Heart right ventricle (tissue), 16 donors: ENCODE measurements at regions of chr20 and their contacts with region 1.

Region 1: DNA sequence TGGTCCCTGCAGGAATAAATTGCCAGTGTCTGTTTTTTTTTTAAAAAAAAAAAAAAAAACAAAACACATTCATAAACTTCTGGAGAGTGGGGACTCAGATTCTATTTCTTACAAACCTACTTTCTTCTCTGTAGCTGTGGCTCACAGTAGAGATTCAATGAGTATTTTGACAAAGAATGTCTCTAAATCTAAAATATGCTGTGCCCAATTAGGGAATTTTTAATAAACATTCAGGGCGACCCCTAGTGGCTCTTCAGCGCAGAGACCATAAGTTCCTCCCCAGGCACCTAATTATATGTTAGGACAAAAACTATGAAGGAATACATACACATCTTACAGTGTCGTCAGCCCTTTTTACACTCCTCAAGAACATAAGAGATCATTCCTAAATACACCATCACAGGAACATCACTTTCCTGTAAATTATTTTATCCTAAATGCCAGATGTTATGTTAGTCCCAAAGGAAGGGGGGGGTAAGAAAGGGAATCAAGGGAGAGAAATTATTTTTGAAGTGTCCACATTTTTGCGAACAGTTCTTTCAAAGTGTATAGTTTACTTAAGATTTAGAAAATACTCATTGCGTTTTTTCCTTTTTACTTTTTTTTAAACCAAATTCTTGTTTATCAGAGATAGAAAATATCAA is 21.8 kb upstream of the NAA20 start:
- DNase-seq: peak in 1 of 2 donors; percentile 47
- ATAC-seq: peak in 4 of 8 donors; percentile 27 to 54 (median 34)
- H3K4me3 ChIP-seq: no peak overlapping the region
- H3K27ac ChIP-seq: peak overlapping the region in 8 of 10 donors; percentile 15 to 81 (median 74)
- H3K4me1 ChIP-seq: peaks cover 42 to 99% (median 88%) of the 10 kb centered on the region in 9 donors
- H3K27me3 ChIP-seq: no peaks in the 10 kb centered on the region
- CTCF ChIP-seq: peak; percentile 59 to 88 (median 79)

Region 2: GRCh38 chr20:19775360-19776253 is 219.7 kb before region 1 on chr20:
- intact Hi-C with region 1: loop called in 4 of 10 experiments (anchors 5 to 10 kb)
- DNase-seq: no peak
- ATAC-seq: peak in 5 of 8 donors; percentile 27 to 62 (median 60)
- H3K4me3 ChIP-seq: no peak overlapping the region
- H3K27ac ChIP-seq: peak overlapping the region in 9 of 10 donors; percentile 8 to 71 (median 57)
- H3K4me1 ChIP-seq: peaks cover 33 to 95% (median 74%) of the 10 kb centered on the region in 9 donors
- H3K27me3 ChIP-seq: no peaks in the 10 kb centered on the region
- CTCF ChIP-seq: no peak

Region 3: GRCh38 chr20:19889011-19889953 is 106.1 kb before region 1 on chr20:
- intact Hi-C with region 1: loop called in 4 of 10 experiments (anchors 5 to 10 kb)
- DNase-seq: peak; percentile 66 to 84
- ATAC-seq: peak; percentile 70 to 86 (median 80)
- H3K4me3 ChIP-seq: peak overlapping the region in 9 of 10 donors; percentile 30 to 58 (median 54)
- H3K27ac ChIP-seq: peak overlapping the region; percentile 72 to 98 (median 88)
- H3K4me1 ChIP-seq: peaks cover 29 to 97% (median 67%) of the 10 kb centered on the region in 9 donors
- H3K27me3 ChIP-seq: no peaks in the 10 kb centered on the region
- CTCF ChIP-seq: no peak

Region 4: GRCh38 chr20:19909725-19910124 is 85.6 kb before region 1 on chr20:
- intact Hi-C with region 1: loop called in 3 of 10 experiments (anchors 5 to 10 kb)
- DNase-seq: peak; percentile 77 to 81
- ATAC-seq: peak; percentile 83 to 94 (median 90)
- H3K4me3 ChIP-seq: no peak overlapping the region
- H3K27ac ChIP-seq: peak overlapping the region; percentile 17 to 83 (median 62)
- H3K4me1 ChIP-seq: peaks cover 5 to 86% (median 65%) of the 10 kb centered on the region in 9 donors
- H3K27me3 ChIP-seq: no peaks in the 10 kb centered on the region
- CTCF ChIP-seq: no peak

Region 5: GRCh38 chr20:19944772-19945459 is 50.4 kb before region 1 on chr20:
- intact Hi-C with region 1: loop called in 1 of 10 experiments (anchors 5 kb)
- DNase-seq: no peak
- ATAC-seq: peak in 7 of 8 donors; percentile 53 to 77 (median 67)
- H3K4me3 ChIP-seq: no peak overlapping the region
- H3K27ac ChIP-seq: peak overlapping the region; percentile 20 to 89 (median 74)
- H3K4me1 ChIP-seq: peaks cover 20 to 91% (median 71%) of the 10 kb centered on the region in 9 donors
- H3K27me3 ChIP-seq: no peaks in the 10 kb centered on the region
- CTCF ChIP-seq: no peak

Region 6: DNA sequence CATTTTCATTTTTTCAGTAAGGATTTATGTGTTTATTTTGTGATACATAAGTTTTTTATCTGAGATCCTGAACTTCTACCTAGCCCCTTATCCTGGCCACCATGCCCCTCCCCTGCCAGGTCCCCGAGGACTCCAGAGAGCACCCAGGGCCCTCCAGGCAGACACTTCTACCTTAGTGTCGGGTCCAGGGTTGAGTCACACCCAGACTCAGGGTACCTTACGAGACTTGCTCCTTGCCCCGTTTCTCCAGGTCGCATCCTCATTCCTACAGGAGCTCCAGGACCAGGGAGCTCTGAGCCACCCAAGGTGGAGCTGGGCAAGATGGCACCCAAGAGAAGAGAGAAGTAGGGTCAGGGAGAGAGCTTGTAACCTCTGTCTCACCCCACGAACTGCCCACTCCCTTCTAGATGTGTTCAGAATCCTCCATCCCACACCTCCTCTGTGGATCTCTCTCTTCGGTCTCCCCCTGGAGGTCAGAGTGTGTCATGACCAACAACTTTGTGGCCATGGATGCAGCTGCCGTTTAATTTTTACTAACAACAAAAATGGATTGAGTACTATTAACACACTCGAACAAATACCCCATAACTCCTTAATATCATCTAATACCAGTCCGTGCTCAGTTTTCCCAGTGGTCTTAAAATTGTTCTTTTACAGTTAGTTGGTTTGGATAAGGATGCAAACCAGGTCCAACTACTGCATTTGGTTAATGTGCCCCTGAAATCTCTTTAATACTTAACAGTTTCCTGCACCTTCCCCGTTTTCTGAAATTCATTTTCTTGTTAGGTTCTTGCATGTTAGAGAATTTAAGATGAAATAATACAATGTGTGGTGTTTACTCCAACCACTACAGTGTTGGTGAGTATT is 242.0 kb after region 1 on chr20:
- intact Hi-C with region 1: no loop called
- DNase-seq: peak in 1 of 2 donors; percentile 37
- ATAC-seq: peak in 7 of 8 donors; percentile 55 to 76 (median 69)
- H3K4me3 ChIP-seq: no peak overlapping the region
- H3K27ac ChIP-seq: no peak overlapping the region
- H3K4me1 ChIP-seq: peaks cover 0 to 10% (median 0%) of the 10 kb centered on the region in 9 donors
- H3K27me3 ChIP-seq: peaks cover 0 to 9% (median 0%) of the 10 kb centered on the region in 7 donors
- CTCF ChIP-seq: peak; percentile 52 to 82 (median 71)